Activated T-helper 2 cell treated with anti-CD3 and anti-CD28 coated beads, Interferon-gamma antibody, Interleukin-2, Interleukin-4, amounts not matched to agents 10 μg/mL and 5 μg/mL and 100 μg/mL, durations not matched to agents 14 hours and 24 hours and 36 hours (primary cell): ENCODE measurements at regions of chr9 and their contacts with region 1.

Region 1: DNA sequence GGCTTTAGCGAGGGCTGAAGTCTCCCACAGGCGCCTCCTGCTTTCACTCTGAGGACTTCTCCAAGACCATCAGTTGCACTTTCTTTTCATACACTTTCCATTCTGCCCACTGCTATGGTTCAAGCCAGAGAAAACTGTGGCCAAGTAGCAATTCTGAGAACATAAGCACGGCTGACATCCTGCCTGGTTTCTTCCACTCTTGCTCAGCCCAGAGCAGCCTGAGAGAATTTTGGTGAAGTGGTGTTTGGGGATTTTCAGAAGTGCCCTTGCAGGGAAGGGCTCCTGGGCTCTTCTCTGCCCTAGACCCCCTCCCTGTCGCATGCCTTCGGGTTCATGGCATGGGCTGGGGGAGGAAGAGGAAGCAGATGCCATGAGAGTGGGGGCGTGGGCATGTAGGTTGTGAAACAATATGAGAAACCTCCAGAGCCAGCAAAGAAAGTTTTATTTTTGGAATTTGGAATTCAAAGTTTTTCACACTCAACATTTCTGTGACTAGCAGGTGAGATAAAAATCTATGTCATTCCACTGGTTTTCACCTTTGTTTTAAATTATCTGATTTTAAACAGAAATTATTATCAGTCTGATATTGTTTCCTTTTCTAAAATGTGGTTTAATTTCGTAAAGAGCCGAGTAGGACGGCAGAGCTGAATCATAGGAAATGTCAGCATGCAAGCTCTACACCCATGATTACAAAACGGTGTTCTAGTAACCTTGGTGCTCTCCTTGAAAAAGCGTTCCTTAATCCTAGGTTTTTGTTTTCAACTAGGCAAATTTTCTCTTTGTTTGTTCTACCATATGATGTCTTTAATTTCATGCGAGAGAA is 27.8 kb upstream of the TNFSF8 start:
- DNase-seq: peak; percentile 33
- H3K4me3 Mint-ChIP-seq: peak overlapping the region; percentile 70
- H3K27ac Mint-ChIP-seq: peak overlapping the region; percentile 94
- H3K4me1 Mint-ChIP-seq: peaks cover 54% of the 10 kb centered on the region
- H3K27me3 Mint-ChIP-seq: no peaks in the 10 kb centered on the region

Region 2: DNA sequence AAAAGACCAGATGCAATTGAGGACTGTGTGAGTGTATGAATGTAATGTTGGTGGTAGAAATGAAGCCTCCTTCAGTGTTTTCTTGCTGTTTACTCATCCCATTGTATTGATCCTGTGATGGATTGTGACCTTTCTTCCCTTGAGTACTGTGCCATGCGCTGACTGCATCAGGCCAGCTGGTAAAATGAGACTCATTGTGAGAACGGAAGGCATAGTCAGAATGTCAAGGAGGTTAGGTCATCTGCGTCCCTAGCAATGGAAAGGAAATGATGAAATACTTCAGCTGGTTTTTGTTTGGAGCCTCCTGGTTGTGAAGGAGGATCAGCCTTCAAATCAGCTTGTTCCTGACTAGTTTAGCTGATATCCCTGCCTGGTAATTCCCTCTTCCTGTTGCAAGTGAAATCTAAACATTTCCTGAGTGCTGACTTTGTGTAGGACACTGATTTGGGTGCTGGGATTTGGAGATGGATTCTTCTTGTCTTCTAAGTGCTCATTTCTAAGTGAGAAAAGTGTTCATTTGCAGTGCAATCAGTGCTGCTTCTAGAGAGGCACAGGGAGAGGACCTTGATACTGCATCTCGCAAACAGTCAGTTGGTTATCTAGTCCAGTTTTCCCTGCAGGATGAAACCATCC is 63.3 kb before region 1 on chr9:
- intact Hi-C with region 1: loop called (anchors 1 kb)
- DNase-seq: no peak
- H3K4me3 Mint-ChIP-seq: no peak overlapping the region
- H3K27ac Mint-ChIP-seq: peak overlapping the region; percentile 84
- H3K4me1 Mint-ChIP-seq: peaks cover 50% of the 10 kb centered on the region
- H3K27me3 Mint-ChIP-seq: no peaks in the 10 kb centered on the region

Region 3: DNA sequence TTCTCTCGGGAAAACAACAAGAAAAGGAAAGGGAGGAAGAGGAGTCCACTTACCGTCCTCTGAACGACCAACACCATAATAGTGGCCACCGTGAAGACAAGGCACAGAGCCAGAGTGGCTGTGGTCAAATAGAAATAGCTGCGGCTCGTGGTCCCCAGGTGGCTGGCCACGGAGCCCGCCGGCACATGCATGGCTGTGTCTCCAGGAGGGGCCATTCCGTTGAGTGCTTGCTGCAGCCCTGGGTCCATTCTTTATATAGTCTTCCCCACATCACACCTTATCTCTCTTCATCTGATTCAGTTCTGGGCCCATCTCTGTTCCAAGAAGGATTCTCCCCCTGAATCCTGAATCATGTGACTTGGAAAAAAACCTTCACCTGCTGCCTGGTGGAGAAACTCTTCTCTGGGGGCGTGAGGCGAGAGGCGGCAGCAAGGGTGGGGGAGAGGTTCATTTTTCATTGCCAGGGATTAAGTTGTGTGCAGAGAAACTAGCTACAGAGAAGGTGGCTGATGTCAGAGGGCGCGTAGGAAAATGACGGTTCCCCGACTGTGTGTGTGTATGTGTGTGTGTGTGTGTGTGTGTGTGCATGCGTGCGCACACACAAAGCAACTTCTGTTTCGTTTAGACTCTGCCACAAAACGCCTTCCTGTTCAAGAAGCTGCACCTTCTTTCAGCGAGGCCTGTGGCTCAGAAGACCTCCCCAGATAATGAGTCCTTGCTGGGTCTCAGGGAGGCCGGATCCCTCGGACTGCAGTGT is 28.0 kb before region 1 on chr9 and contains the start of gene TNFSF8:
- intact Hi-C with region 1: loop called (anchors 1 kb)
- DNase-seq: peak; percentile 79
- H3K4me3 Mint-ChIP-seq: peak within 1 kb of the TSS; percentile 98
- H3K27ac Mint-ChIP-seq: peak within 1 kb of the TSS; percentile 98
- H3K4me1 Mint-ChIP-seq: peaks cover 47% of the 10 kb centered on the region
- H3K27me3 Mint-ChIP-seq: no peaks in the 10 kb centered on the region
- total RNA-seq, gene TNFSF8: 73.6 and 82.3 TPM in 2 replicates

Region 4: DNA sequence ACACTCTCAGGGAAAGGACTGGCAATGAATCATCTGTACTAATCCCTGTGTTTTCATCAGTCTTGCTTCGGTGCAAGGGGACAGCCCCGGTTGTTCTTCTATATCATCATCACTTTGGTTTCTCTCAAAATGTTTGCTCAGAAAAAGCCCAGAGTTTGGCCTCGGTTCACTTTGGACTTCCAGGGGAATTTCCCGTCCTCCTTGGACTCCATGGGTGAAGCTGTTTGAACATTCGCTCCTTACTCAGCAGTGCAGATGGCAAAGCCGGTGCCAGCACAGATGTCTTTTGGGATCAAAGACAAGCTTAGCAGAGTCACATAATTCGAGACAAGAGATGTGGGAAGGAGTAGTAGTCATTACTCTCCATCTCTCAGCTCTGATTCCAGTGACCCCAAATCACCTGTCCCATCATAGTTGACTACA is 42.0 kb after region 1 on chr9:
- intact Hi-C with region 1: loop called (anchors 1 kb)
- DNase-seq: no peak
- H3K4me3 Mint-ChIP-seq: peak overlapping the region; percentile 69
- H3K27ac Mint-ChIP-seq: peak overlapping the region; percentile 54
- H3K4me1 Mint-ChIP-seq: peaks cover 39% of the 10 kb centered on the region
- H3K27me3 Mint-ChIP-seq: no peaks in the 10 kb centered on the region

Region 5: GRCh38 chr9:115035841-115036612 is 77.8 kb after region 1 on chr9:
- intact Hi-C with region 1: loop called (anchors 2 kb)
- DNase-seq: peak; percentile 14
- H3K4me3 Mint-ChIP-seq: peak overlapping the region; percentile 41
- H3K27ac Mint-ChIP-seq: peak overlapping the region; percentile 89
- H3K4me1 Mint-ChIP-seq: peaks cover 45% of the 10 kb centered on the region
- H3K27me3 Mint-ChIP-seq: peaks cover 8% of the 10 kb centered on the region